ENCODE measurements at regions of chr5 and their contacts with region 1.

Region 1: DNA sequence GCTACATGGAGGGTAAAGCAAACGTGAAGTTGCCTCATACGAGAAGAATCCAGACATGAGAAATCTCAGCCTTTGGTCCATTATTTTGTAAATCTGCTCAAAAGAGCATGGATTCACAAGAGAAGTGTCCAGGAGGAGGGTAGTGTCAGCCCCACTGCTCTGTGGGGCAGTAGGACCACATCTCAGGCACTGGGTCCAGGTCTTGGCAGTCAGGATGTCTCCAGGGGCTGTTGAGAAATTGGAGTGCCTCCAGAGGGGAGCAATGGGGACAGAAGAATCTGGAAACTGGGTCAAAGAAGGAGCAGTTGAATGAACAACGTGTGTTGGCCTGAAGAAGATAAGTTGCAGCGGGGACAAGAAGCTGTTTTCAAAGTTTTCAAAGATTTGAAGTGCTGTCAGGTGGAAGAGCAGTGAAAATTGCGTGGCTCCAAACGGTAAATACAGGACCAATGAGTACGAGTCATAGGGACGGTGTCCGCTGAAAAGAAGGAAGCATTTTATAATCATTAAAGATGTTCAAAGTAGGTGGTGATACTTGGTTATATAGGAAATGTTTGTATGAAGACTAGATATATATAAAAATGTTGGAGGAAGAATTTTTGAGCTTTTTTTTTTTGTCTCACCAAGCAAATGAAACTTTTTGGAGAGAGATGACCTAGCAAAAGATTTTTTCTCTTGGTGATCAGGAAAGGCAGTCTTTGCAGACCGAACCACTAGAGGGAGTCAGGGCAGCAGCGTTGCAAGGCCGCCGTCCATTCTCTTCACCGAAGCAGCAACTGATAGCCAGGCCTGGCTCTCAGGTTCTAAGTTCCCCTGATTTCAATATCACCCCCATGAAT is 57.1 kb upstream of the ZBED3 start:
- DNase-seq: peak in 8 of 9 donors; percentile 46 to 74 (median 62)
- ATAC-seq: peak; percentile 90
- H3K4me3 ChIP-seq: no peak overlapping the region
- H3K4me3 Mint-ChIP-seq: no peak overlapping the region
- H3K27ac ChIP-seq: no peak overlapping the region
- H3K27ac Mint-ChIP-seq: peak overlapping the region in 3 of 9 donors; percentile 8 to 80 (median 68)
- H3K4me1 ChIP-seq: no peaks in the 10 kb centered on the region
- H3K4me1 Mint-ChIP-seq: peaks cover 0 to 16% (median 11%) of the 10 kb centered on the region in 7 donors
- H3K27me3 ChIP-seq: no peaks in the 10 kb centered on the region
- H3K27me3 Mint-ChIP-seq: peaks cover 0 to 17% (median 9%) of the 10 kb centered on the region in 5 donors

Region 2: GRCh38 chr5:76867827-76868693 is 276.2 kb before region 1 on chr5:
- CTCF ChIA-PET with region 1: no interaction called
- POLR2A ChIA-PET with region 1: no interaction called
- intact Hi-C with region 1: loop called in 1 of 2 experiments (anchors 5 kb)
- DNase-seq: peak; percentile 14 to 63 (median 53)
- ATAC-seq: peak; percentile 90
- H3K4me3 ChIP-seq: no peak overlapping the region
- H3K4me3 Mint-ChIP-seq: no peak overlapping the region
- H3K27ac ChIP-seq: no peak overlapping the region
- H3K27ac Mint-ChIP-seq: no peak overlapping the region
- H3K4me1 ChIP-seq: no peaks in the 10 kb centered on the region
- H3K4me1 Mint-ChIP-seq: peaks cover 0 to 4% (median 0%) of the 10 kb centered on the region in 7 donors
- H3K27me3 ChIP-seq: no peaks in the 10 kb centered on the region
- H3K27me3 Mint-ChIP-seq: no peaks in the 10 kb centered on the region

Region 3: GRCh38 chr5:77192444-77193050 is 48.3 kb after region 1 on chr5:
- CTCF ChIA-PET with region 1: no interaction called
- POLR2A ChIA-PET with region 1: no interaction called
- intact Hi-C with region 1: loop called in 1 of 2 experiments (anchors 5 kb)
- DNase-seq: no peak
- ATAC-seq: no peak
- H3K4me3 ChIP-seq: no peak overlapping the region
- H3K4me3 Mint-ChIP-seq: no peak overlapping the region
- H3K27ac ChIP-seq: no peak overlapping the region
- H3K27ac Mint-ChIP-seq: no peak overlapping the region
- H3K4me1 ChIP-seq: no peaks in the 10 kb centered on the region
- H3K4me1 Mint-ChIP-seq: no peaks in the 10 kb centered on the region
- H3K27me3 ChIP-seq: no peaks in the 10 kb centered on the region
- H3K27me3 Mint-ChIP-seq: peaks cover 7 to 38% (median 13%) of the 10 kb centered on the region in 5 donors

Region 4: GRCh38 chr5:77239126-77239741 is 95.0 kb after region 1 on chr5:
- CTCF ChIA-PET with region 1: interaction called, 3 read pairs
- POLR2A ChIA-PET with region 1: no interaction called
- intact Hi-C with region 1: loop called in 1 of 2 experiments (anchors 1 kb)
- DNase-seq: peak in 4 of 9 donors; percentile 5 to 31 (median 17)
- ATAC-seq: peak; percentile 53
- H3K4me3 ChIP-seq: no peak overlapping the region
- H3K4me3 Mint-ChIP-seq: no peak overlapping the region
- H3K27ac ChIP-seq: no peak overlapping the region
- H3K27ac Mint-ChIP-seq: peak overlapping the region in 1 of 9 donors; percentile 37
- H3K4me1 ChIP-seq: no peaks in the 10 kb centered on the region
- H3K4me1 Mint-ChIP-seq: peaks cover 0 to 4% (median 0%) of the 10 kb centered on the region in 7 donors
- H3K27me3 ChIP-seq: no peaks in the 10 kb centered on the region
- H3K27me3 Mint-ChIP-seq: peaks cover 13 to 35% (median 23%) of the 10 kb centered on the region in 5 donors

Region 5: GRCh38 chr5:78162253-78162862 is 1018.1 kb after region 1 on chr5:
- CTCF ChIA-PET with region 1: no interaction called
- POLR2A ChIA-PET with region 1: no interaction called
- intact Hi-C with region 1: loop called in 1 of 2 experiments (anchors 10 kb)
- DNase-seq: peak in 5 of 9 donors; percentile 5 to 20 (median 13)
- ATAC-seq: no peak
- H3K4me3 ChIP-seq: no peak overlapping the region
- H3K4me3 Mint-ChIP-seq: no peak overlapping the region
- H3K27ac ChIP-seq: no peak overlapping the region
- H3K27ac Mint-ChIP-seq: no peak overlapping the region
- H3K4me1 ChIP-seq: no peaks in the 10 kb centered on the region
- H3K4me1 Mint-ChIP-seq: no peaks in the 10 kb centered on the region
- H3K27me3 ChIP-seq: no peaks in the 10 kb centered on the region
- H3K27me3 Mint-ChIP-seq: no peaks in the 10 kb centered on the region